Ovary (tissue), 10 donors: ENCODE measurements at regions of chr3 and their contacts with region 1.

Region 1: DNA sequence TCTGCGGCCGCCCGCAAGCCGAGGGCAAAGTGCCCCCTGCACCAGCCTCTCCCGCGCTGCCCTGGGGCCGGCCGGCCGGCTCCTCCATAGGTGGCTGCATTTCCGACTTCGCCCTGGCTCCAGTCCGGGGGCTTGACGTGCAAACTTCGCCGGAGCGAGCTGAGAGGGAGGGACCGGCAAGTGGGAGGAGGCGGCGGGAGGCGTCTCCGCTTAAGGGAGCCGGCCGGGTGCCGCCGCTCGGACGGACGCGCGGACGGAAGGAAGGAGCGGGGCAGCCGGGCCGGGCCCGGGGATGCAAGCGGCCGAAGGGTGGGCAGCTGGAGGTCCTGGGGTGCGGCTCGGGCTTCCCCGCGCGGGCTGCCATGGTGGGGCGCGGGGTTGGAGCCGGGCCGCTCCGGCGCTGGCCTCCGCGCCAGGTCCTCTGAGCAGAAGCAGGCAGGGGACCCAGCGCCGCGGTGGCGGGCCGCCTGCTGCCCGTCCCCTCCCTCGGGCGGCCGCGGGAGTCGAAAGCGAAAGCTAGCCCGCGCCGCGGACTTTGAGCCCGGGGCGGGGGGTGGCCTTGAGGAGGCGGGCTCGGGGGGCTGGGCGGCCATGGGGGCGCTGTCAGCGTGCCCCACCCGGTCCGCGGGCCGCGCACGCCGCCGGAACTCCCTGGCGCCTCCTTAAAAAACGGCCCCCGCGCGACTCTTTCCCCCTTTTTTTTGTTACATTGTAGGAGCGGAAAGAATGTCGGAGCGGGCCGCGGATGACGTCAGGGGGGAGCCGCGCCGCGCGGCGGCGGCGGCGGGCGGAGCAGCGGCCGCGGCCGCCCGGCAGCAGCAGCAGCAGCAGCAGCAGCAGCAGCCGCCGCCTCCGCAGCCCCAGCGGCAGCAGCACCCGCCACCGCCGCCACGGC is at the start of gene SCAANT1:
- DNase-seq: peak; percentile 88 to 93 (median 91)
- H3K4me3 ChIP-seq: peak within 1 kb of the TSS; percentile 81
- H3K27ac ChIP-seq: peak within 1 kb of the TSS; percentile 96 to 100
- H3K4me1 ChIP-seq: peaks cover 5% of the 10 kb centered on the region
- H3K27me3 ChIP-seq: no peaks in the 10 kb centered on the region
- CTCF ChIP-seq: peak in 2 of 3 donors; percentile 11 to 24
- EP300 ChIP-seq: no peak
- POLR2A ChIP-seq: peak; percentile 67
- total RNA-seq, gene SCAANT1: not detected

Region 2: GRCh38 chr3:62097121-62097520 is 1815.0 kb before region 1 on chr3:
- intact Hi-C with region 1: loop called in 1 of 4 experiments (anchors 10 kb)
- DNase-seq: peak in 2 of 5 donors; percentile 35 to 46
- H3K4me3 ChIP-seq: no peak overlapping the region
- H3K27ac ChIP-seq: no peak overlapping the region
- H3K4me1 ChIP-seq: peaks cover 10% of the 10 kb centered on the region
- H3K27me3 ChIP-seq: no peaks in the 10 kb centered on the region
- CTCF ChIP-seq: no peak
- EP300 ChIP-seq: no peak
- POLR2A ChIP-seq: no peak

Region 3: DNA sequence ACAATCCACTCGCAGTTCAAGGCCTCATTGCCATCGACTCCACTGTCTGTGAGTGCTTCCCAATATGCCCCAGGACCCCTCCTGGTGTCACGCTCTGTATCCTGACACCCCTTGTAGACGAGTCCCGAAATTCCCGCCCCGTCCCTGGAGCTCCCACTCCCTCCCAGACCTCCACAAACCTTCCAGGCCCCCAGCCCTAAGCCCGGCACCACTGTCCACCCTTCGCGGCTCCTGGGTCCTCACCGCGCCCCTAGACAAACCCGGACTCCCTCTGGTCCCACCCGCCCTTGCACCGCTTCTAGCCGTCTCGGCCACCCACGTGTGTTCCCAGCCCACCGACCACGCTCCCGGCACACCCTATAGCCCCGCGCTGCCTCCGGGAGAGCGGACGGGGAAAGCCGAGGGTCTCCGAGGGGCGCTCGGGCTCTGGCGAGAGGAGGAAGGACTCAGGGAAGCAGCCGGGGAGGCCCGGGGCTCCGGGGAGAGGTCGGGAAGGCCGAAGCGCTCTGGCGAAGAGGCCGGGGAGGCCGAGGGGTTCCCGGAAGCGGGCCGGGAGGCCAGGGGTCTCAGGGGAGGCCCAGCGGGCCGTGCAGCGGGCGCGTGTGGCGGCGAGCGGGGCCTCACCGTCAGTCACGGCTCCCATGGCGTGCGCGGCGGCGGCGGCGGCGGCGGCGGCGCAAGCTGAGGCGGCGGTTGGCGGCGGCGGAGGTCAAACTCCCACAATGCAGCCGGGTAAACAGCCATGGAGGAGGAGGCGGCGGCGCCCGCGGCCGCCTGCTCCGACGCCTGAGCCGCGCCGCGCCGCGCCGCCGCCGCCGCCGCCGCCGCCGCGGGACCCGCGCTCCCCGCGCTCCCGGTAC is 48.7 kb before region 1 on chr3 and contains the starts of genes ATXN7 and THOC7:
- intact Hi-C with region 1: loop called in 1 of 4 experiments (anchors 5 kb)
- DNase-seq: peak; percentile 55 to 82 (median 74)
- H3K4me3 ChIP-seq: peak within 1 kb of the TSS; percentile 96
- H3K27ac ChIP-seq: peak within 1 kb of the TSS; percentile 85 to 91
- H3K4me1 ChIP-seq: peaks cover 7% of the 10 kb centered on the region
- H3K27me3 ChIP-seq: no peaks in the 10 kb centered on the region
- CTCF ChIP-seq: no peak
- EP300 ChIP-seq: no peak
- POLR2A ChIP-seq: no peak
- total RNA-seq, gene ATXN7: 23.0 to 47.0 (median 29.8) TPM
- total RNA-seq, gene THOC7: 38.2 to 50.6 (median 46.7) TPM

Region 4: GRCh38 chr3:63896332-63897030 is 15.6 kb before region 1 on chr3:
- intact Hi-C with region 1: no loop called
- DNase-seq: no peak
- H3K4me3 ChIP-seq: no peak overlapping the region
- H3K27ac ChIP-seq: no peak overlapping the region
- H3K4me1 ChIP-seq: peaks cover 3% of the 10 kb centered on the region
- H3K27me3 ChIP-seq: no peaks in the 10 kb centered on the region
- CTCF ChIP-seq: no peak
- EP300 ChIP-seq: no peak
- POLR2A ChIP-seq: no peak